Naive thymus-derived CD8-positive, alpha-beta T cell (primary cell): ENCODE measurements at regions of chr11 and their contacts with region 1.

Region 1: GRCh38 chr11:2992234-2992996 is at the start of gene NAP1L4:
- DNase-seq: peak; percentile 90 to 98 (median 96)
- ATAC-seq: peak; percentile 78 to 84
- H3K4me3 Mint-ChIP-seq: peak within 1 kb of the TSS; percentile 79 to 100 (median 98)
- H3K27ac Mint-ChIP-seq: peak within 1 kb of the TSS; percentile 96 to 99 (median 98)
- H3K4me1 Mint-ChIP-seq: peaks cover 20 to 40% (median 29%) of the 10 kb centered on the region in 4 donors
- H3K27me3 Mint-ChIP-seq: peaks cover 0 to 2% (median 0%) of the 10 kb centered on the region in 5 donors
- polyA plus RNA-seq, gene NAP1L4: 169 to 207 (median 201) TPM

Region 2: DNA sequence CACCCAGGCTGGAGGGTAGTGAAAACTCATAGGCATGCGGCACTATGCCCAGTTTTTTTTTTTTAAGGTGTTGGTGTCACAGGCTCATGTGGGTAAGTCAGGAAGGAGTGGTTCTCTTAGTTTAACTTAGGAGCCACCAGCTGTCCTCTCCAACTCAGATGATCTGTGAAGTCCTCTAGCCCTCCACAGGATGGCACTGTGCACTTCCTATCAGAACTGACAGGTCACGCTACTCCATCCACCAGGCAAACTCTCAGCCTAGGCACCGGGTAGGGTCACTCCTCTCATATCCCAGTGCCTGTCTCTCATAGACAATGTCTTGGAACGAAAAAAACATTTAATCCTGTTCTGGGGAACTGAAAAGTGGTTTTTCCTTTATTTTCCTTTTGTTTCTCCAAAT is 16.8 kb before region 1 on chr11:
- POLR2A ChIA-PET with region 1: interaction called, 13 read pairs
- DNase-seq: peak; percentile 21 to 78 (median 54)
- ATAC-seq: peak; percentile 91 to 96
- H3K4me3 Mint-ChIP-seq: peak overlapping the region in 2 of 10 donors; percentile 14 to 22
- H3K27ac Mint-ChIP-seq: peak overlapping the region in 8 of 10 donors; percentile 35 to 87 (median 68)
- H3K4me1 Mint-ChIP-seq: peaks cover 21 to 62% (median 52%) of the 10 kb centered on the region in 4 donors
- H3K27me3 Mint-ChIP-seq: no peaks in the 10 kb centered on the region

Region 3: DNA sequence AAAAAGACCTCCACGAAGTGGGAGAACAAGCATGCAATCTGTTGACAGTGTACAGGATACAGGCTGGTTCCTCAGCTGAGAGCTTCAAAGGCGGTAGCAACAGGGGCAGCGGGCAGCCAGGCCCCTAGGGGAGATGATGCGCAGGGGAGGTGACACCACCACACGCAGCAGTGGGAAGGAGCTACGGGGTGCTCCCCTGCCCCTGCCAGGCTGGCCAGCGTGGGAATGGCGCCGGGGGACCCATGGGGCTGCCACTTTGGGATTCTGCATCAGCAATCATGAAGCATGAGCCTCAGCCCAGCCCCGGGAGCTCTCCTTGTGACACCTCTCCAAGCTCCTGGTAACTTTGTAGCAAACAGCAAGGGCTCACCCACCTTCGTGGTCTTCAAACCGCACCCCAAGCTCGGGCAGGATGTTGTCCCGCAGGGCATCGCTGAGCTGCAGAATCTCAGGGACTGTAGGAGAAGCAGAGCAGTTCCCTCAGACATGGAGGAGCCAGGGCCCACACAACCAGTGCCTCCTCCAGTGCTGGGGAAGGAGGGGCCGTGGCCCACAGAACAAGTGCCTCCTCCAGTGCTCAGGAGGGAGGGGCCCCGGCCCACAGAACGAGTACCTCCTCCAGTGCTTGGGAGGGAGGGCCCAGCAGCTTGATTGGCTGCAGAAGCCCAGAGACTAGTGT is 14.2 kb after region 1 on chr11:
- POLR2A ChIA-PET with region 1: interaction called, 457 read pairs
- DNase-seq: peak; percentile 38 to 91 (median 72)
- ATAC-seq: peak; percentile 97 to 99
- H3K4me3 Mint-ChIP-seq: peak overlapping the region; percentile 84 to 93 (median 92)
- H3K27ac Mint-ChIP-seq: peak overlapping the region in 9 of 10 donors; percentile 63 to 95 (median 94)
- H3K4me1 Mint-ChIP-seq: peaks cover 23 to 87% (median 57%) of the 10 kb centered on the region in 4 donors
- H3K27me3 Mint-ChIP-seq: no peaks in the 10 kb centered on the region

Region 4: GRCh38 chr11:3014057-3014938 is 21.9 kb after region 1 on chr11:
- POLR2A ChIA-PET with region 1: interaction called, 457 read pairs
- DNase-seq: peak; percentile 65 to 97 (median 90)
- ATAC-seq: peak; percentile 84 to 90
- H3K4me3 Mint-ChIP-seq: peak overlapping the region; percentile 55 to 80 (median 68)
- H3K27ac Mint-ChIP-seq: peak overlapping the region; percentile 82 to 98 (median 95)
- H3K4me1 Mint-ChIP-seq: peaks cover 19 to 92% (median 70%) of the 10 kb centered on the region in 4 donors
- H3K27me3 Mint-ChIP-seq: no peaks in the 10 kb centered on the region

Region 5: DNA sequence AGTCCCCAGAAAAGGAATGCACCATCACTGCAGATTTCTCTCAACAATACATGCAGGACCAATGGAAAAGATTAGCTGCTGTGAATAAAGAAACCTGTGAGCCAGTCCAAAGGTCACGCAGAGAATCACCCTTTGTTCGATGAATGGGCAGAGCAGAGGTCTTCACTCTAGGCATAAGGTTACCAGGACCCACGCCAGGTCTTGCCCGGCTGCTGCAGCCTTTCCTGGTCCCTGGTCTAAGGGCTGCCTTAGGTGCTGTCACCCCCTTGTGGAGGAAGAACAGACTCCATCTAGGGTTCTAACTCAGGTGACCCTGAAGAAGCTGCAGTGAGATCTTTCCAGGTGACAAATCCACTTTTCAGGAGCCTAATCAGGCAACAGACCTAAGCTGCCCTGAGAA is 28.7 kb after region 1 on chr11:
- POLR2A ChIA-PET with region 1: interaction called, 457 read pairs
- DNase-seq: peak; percentile 26 to 80 (median 56)
- ATAC-seq: peak; percentile 83
- H3K4me3 Mint-ChIP-seq: peak overlapping the region in 1 of 10 donors; percentile 10
- H3K27ac Mint-ChIP-seq: peak overlapping the region in 6 of 10 donors; percentile 41 to 73 (median 68)
- H3K4me1 Mint-ChIP-seq: peaks cover 23 to 68% (median 60%) of the 10 kb centered on the region in 4 donors
- H3K27me3 Mint-ChIP-seq: no peaks in the 10 kb centered on the region